ENCODE measurements at regions of chr18 and their contacts with region 1.

Region 1: DNA sequence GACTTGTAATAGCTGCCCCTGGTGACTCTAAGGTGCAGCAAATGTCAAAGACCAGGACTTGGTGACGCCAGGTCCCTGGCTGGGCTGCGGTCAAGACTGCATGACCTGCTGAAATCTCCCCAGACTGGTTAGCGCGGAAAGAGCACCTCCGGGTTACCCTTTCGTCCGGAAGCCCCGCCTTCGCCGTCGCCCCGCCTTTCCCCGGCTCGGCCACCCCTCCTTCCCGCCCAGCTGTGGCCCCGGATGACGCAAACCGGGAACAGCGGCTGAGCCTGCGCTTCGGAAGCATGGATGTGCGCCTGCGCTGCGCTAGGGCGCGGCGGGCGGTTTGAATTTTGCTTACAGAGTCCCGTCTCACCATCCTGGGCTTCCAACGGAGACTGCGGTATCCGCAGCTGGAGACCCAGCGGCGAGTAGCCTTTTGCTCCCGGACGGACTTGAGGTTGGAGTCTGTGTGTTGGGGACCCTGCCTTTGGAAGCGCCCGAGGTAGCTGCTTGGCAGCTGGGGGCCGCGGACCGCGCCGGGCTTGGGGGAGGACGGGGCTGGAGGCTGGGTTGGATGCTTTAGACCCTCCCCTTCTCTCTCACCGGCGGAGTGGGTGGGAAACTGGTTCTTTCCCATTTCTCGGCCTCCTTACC is at the start of gene SKA1:
- DNase-seq: peak; percentile 94
- H3K4me3 ChIP-seq: peak within 1 kb of the TSS; percentile 59
- H3K27ac ChIP-seq: peak within 1 kb of the TSS; percentile 85
- H3K4me1 ChIP-seq: no peaks in the 10 kb centered on the region
- H3K27me3 ChIP-seq: no peaks in the 10 kb centered on the region
- CTCF ChIP-seq: no peak
- total RNA-seq, gene SKA1: 3.6 to 21.3 TPM

Region 2: DNA sequence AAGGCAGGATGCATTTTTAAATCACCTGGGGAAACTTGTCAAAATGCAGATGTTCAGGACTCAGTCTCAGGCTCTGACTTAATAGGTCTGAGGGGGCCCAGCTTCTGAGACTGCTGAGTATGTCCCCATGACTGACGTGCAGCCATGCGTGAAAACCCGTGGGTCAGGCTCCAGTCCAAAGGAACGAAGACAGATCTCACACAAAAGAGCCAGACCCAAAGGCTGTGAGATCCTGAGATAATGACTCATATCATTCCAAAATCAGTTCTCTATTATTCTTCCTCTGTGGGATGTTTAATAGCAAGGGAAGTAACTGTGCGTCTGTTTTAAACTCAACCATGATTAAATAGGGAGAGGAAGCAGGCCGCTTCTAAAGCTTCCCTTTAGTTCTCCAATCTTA is 454.1 kb before region 1 on chr18:
- intact Hi-C with region 1: no loop called
- DNase-seq: no peak
- H3K4me3 ChIP-seq: no peak overlapping the region
- H3K27ac ChIP-seq: no peak overlapping the region
- H3K4me1 ChIP-seq: no peaks in the 10 kb centered on the region
- H3K27me3 ChIP-seq: no peaks in the 10 kb centered on the region
- CTCF ChIP-seq: no peak

Region 3: GRCh38 chr18:50297621-50298442 is 77.0 kb before region 1 on chr18:
- intact Hi-C with region 1: loop called (anchors 10 kb)
- DNase-seq: peak; percentile 77
- H3K4me3 ChIP-seq: peak overlapping the region; percentile 40
- H3K27ac ChIP-seq: no peak overlapping the region
- H3K4me1 ChIP-seq: no peaks in the 10 kb centered on the region
- H3K27me3 ChIP-seq: peaks cover 3% of the 10 kb centered on the region
- CTCF ChIP-seq: no peak

Region 4: DNA sequence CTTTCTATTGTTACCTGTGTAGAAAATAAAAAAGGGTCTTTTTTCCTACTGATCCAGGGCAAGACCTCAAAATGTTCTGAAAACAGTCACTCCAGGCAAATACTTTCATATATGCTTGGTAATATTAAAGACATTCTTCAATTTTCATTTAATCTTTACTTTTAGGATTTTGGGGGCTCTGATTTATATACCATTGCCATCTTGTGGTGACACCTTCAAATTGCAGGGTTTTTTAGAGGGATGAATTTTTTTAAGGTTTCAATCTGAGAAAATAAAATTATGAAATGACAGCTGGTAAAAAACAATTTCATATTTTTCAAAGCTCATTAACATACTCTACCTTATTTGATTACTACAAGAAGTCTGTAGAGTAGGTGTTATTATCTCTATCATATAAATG is 211.8 kb after region 1 on chr18:
- intact Hi-C with region 1: no loop called
- DNase-seq: no peak
- H3K4me3 ChIP-seq: no peak overlapping the region
- H3K27ac ChIP-seq: no peak overlapping the region
- H3K4me1 ChIP-seq: no peaks in the 10 kb centered on the region
- H3K27me3 ChIP-seq: no peaks in the 10 kb centered on the region
- CTCF ChIP-seq: no peak

Measured in colonic mucosa (tissue), 4 donors.